ENCODE measurements at regions of chr17 and their contacts with region 1.

Region 1: GRCh38 chr17:73939806-73940493 is 263.5 kb upstream of the RPL38 start:
- DNase-seq: no peak
- ATAC-seq: no peak
- H3K4me3 ChIP-seq: no peak overlapping the region
- H3K27ac ChIP-seq: no peak overlapping the region
- H3K4me1 ChIP-seq: no peaks in the 10 kb centered on the region
- H3K27me3 ChIP-seq: peaks cover 63% of the 10 kb centered on the region
- CTCF ChIP-seq: no peak

Region 2: GRCh38 chr17:73719588-73720071 is 220.3 kb before region 1 on chr17:
- CTCF ChIA-PET with region 1: no interaction called
- POLR2A ChIA-PET with region 1: no interaction called
- intact Hi-C with region 1: no loop called
- DNase-seq: no peak
- ATAC-seq: no peak
- H3K4me3 ChIP-seq: no peak overlapping the region
- H3K27ac ChIP-seq: no peak overlapping the region
- H3K4me1 ChIP-seq: no peaks in the 10 kb centered on the region
- H3K27me3 ChIP-seq: peaks cover 94% of the 10 kb centered on the region
- CTCF ChIP-seq: no peak

Region 3: GRCh38 chr17:73872816-73873215 is 67.1 kb before region 1 on chr17:
- CTCF ChIA-PET with region 1: interaction called, 10 read pairs
- POLR2A ChIA-PET with region 1: no interaction called
- intact Hi-C with region 1: no loop called
- DNase-seq: no peak
- ATAC-seq: no peak
- H3K4me3 ChIP-seq: no peak overlapping the region
- H3K27ac ChIP-seq: no peak overlapping the region
- H3K4me1 ChIP-seq: no peaks in the 10 kb centered on the region
- H3K27me3 ChIP-seq: peaks cover 27% of the 10 kb centered on the region
- CTCF ChIP-seq: no peak